ENCODE measurements at regions of chr1 and their contacts with region 1.

Region 1: DNA sequence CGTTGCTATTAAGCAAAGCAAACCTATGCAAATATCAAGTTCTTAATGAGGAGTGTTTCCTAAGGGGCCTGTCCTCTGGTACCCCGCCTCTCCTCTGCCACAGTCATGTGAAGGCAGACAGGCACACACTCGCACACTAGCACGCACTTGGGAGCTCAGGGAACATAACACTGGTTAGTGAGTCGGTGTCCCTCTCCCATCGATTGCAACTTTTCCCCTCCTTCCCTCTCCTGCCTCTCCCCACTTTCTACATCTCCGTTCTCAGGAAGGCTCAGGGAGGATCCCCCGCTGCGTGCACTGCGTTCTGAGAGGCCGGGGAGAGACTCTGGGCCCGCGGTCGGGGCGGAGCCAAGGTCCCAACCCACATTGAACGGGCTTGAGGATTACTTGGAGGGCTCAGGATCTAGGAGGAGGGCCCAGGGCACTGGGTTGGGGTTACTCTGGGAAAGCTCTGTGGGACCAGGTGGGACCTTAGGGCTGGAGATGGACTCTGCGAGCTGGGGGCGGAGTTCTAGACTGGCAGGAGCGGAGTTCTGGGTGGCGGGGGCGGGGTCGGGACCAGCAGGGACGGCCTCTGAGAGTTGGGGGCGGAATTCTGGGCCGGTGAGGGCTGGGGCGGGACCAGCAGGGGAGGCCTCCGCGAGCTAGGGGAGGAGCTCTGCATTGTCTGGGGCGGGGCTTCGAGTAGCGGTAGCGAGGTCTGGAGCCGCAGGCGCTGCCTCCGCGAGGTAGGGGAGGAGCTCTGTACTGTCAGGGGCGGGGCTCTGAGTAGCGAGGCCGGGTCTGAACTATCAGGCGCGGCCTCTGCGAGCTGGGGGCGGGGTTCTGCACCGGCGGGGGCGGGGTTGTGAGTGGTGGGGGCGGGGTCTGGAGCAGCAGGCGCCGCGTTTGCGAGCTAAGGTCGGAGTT is 533 bp upstream of the LEPR start:
- DNase-seq: peak; percentile 100
- ATAC-seq: peak; percentile 98

Region 2: DNA sequence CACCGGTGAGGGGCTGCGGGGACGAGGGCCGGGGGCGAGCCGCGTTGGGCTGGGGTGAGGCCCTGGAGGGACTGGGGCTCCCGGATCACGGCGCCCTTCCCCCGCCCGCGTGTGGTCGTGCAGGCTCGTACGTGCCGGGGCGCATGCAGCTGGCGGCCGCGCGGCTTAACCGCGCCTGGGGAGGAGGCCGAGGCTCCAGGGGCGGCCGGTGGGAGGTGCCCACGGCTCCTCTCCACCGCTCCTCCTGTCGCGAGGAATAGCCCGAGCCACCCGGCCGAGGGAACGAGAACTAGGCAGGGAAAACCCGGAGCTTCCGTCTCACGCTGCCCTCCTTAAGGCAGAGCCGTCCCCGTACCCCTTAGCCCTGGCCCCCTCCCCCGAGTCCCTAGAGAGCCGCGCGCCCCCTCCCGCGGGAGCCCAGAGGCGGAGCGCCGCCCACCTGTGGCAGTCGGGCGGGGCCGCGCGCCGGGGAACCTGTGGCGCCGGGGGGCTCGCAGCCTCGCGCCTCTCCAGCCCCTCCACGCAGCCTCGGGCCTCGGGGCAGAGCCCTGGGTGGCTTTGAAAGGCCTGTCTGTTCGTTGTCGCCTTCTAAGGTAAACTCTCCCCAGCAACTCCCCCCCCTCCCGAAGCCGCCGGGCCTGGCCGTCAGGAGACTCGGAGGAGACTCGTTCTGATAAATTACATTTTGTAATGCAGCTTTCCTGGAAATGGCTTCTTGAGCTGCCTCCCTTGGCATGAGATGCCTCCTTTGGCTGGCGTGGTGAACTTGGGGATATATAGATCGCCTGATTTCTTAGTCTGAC is 271.2 kb before region 1 on chr1:
- intact Hi-C with region 1: loop called (anchors 5 kb)
- DNase-seq: peak; percentile 78
- ATAC-seq: peak; percentile 75

Region 3: GRCh38 chr1:65265651-65266351 is 154.1 kb before region 1 on chr1:
- intact Hi-C with region 1: loop called (anchors 5 kb)
- DNase-seq: no peak
- ATAC-seq: peak; percentile 85

Region 4: GRCh38 chr1:65493802-65494201 is 73.9 kb after region 1 on chr1:
- intact Hi-C with region 1: loop called (anchors 5 kb)
- DNase-seq: no peak
- ATAC-seq: no peak

Region 5: GRCh38 chr1:65525266-65526048 is 105.5 kb after region 1 on chr1:
- intact Hi-C with region 1: loop called (anchors 5 kb)
- DNase-seq: no peak
- ATAC-seq: peak; percentile 20

Measured in Right ventricle myocardium inferior (tissue), 1 donor.